ENCODE measurements at regions of chr4 and their contacts with region 1.

Region 1: DNA sequence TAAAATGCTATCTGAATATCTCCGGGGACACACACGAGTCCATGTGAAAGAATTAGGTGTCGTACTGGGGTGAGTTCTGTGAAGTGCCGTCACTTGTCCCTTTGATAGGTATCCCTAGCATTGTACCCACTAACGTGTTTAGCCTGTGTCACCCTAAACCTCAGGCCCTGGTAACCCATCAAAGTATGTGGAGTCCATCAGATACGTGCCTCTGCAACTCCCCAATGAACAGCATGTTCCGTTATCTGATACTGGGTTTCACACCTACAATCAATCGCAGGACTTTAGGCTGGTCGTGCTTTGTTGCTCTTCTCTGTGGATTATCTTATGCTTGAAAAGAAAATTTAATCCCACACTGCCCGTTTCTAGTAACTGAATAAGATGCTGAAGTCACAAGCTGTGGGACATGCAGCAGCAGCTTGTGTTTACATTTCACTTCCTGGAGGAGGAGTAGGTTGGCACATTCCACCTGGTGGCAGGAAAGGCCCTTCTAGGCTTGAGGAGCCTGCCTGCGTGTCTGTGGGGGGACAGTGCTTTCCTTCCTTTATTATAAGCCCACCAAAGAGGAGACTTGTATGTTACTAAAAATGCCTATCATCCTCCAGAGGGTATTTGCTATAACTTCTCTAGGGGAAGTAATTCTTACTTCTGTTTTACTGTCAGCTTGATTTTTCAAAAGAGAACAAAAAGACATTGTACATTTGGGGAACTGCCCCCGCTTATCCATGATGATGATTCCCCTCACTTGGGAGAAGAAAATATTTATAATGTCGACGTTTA is 127.2 kb downstream of the FNIP2 start:
- DNase-seq: peak; percentile 30 to 45
- ATAC-seq: peak; percentile 63 to 77 (median 68)
- H3K4me3 ChIP-seq: no peak overlapping the region
- H3K4me3 Mint-ChIP-seq: peak overlapping the region; percentile 63
- H3K27ac ChIP-seq: peak overlapping the region; percentile 71
- H3K27ac Mint-ChIP-seq: peak overlapping the region; percentile 93 to 96
- H3K4me1 ChIP-seq: peaks cover 13% of the 10 kb centered on the region
- H3K4me1 Mint-ChIP-seq: peaks cover 42 to 43% of the 10 kb centered on the region in 2 donors
- H3K27me3 ChIP-seq: no peaks in the 10 kb centered on the region
- H3K27me3 Mint-ChIP-seq: no peaks in the 10 kb centered on the region
- CTCF ChIP-seq: no peak

Region 2: GRCh38 chr4:158945529-158946108 is 49.6 kb after region 1 on chr4:
- intact Hi-C with region 1: loop called (anchors 2 kb)
- DNase-seq: peak in 1 of 2 donors; percentile 26
- ATAC-seq: peak; percentile 71 to 93 (median 81)
- H3K4me3 ChIP-seq: no peak overlapping the region
- H3K4me3 Mint-ChIP-seq: peak overlapping the region; percentile 7
- H3K27ac ChIP-seq: no peak overlapping the region
- H3K27ac Mint-ChIP-seq: peak overlapping the region in 1 of 2 donors; percentile 23
- H3K4me1 ChIP-seq: peaks cover 5% of the 10 kb centered on the region
- H3K4me1 Mint-ChIP-seq: peaks cover 33 to 35% of the 10 kb centered on the region in 2 donors
- H3K27me3 ChIP-seq: peaks cover 3% of the 10 kb centered on the region
- H3K27me3 Mint-ChIP-seq: peaks cover 30 to 64% of the 10 kb centered on the region in 2 donors
- CTCF ChIP-seq: no peak

Region 3: GRCh38 chr4:159102622-159103383 is 206.8 kb after region 1 on chr4 and contains the start of gene RAPGEF2:
- intact Hi-C with region 1: loop called (anchors 5 kb)
- DNase-seq: peak; percentile 79 to 94
- ATAC-seq: peak; percentile 86 to 95 (median 90)
- H3K4me3 ChIP-seq: peak within 1 kb of the TSS; percentile 97
- H3K4me3 Mint-ChIP-seq: peak within 1 kb of the TSS; percentile 92
- H3K27ac ChIP-seq: peak within 1 kb of the TSS; percentile 91
- H3K27ac Mint-ChIP-seq: peak within 1 kb of the TSS; percentile 79 to 96
- H3K4me1 ChIP-seq: peaks cover 19% of the 10 kb centered on the region
- H3K4me1 Mint-ChIP-seq: peaks cover 30 to 38% of the 10 kb centered on the region in 2 donors
- H3K27me3 ChIP-seq: no peaks in the 10 kb centered on the region
- H3K27me3 Mint-ChIP-seq: peaks cover 0 to 11% of the 10 kb centered on the region in 2 donors
- CTCF ChIP-seq: no peak
- total RNA-seq, gene RAPGEF2: 21.9 to 55.6 (median 27.6) TPM

Measured in natural killer cell (primary cell).